Panc1 (cell line): ENCODE measurements at regions of chr18 and their contacts with region 1.

Region 1: GRCh38 chr18:23106580-23106979 is 28.7 kb upstream of the CABLES1 start:
- DNase-seq: peak; percentile 93
- ATAC-seq: peak; percentile 91
- H3K4me3 ChIP-seq: no peak overlapping the region; a peak in 1 of 4 replicates
- H3K27ac ChIP-seq: peak overlapping the region; percentile 89
- H3K4me1 ChIP-seq: peaks cover 57% of the 10 kb centered on the region
- H3K27me3 ChIP-seq: no peaks in the 10 kb centered on the region
- CTCF ChIP-seq: no peak

Region 2: GRCh38 chr18:22813648-22814328 is 292.8 kb before region 1 on chr18:
- CTCF ChIA-PET with region 1: no interaction called
- POLR2A ChIA-PET with region 1: no interaction called
- in situ Hi-C with region 1: no loop called
- intact Hi-C with region 1: no loop called
- DNase-seq: no peak
- ATAC-seq: peak; percentile 88
- H3K4me3 ChIP-seq: no peak overlapping the region
- H3K27ac ChIP-seq: no peak overlapping the region
- H3K4me1 ChIP-seq: no peaks in the 10 kb centered on the region
- H3K27me3 ChIP-seq: peaks cover 7% of the 10 kb centered on the region
- CTCF ChIP-seq: peak; percentile 60; the same call in 1 of the 2 replicates

Region 3: DNA sequence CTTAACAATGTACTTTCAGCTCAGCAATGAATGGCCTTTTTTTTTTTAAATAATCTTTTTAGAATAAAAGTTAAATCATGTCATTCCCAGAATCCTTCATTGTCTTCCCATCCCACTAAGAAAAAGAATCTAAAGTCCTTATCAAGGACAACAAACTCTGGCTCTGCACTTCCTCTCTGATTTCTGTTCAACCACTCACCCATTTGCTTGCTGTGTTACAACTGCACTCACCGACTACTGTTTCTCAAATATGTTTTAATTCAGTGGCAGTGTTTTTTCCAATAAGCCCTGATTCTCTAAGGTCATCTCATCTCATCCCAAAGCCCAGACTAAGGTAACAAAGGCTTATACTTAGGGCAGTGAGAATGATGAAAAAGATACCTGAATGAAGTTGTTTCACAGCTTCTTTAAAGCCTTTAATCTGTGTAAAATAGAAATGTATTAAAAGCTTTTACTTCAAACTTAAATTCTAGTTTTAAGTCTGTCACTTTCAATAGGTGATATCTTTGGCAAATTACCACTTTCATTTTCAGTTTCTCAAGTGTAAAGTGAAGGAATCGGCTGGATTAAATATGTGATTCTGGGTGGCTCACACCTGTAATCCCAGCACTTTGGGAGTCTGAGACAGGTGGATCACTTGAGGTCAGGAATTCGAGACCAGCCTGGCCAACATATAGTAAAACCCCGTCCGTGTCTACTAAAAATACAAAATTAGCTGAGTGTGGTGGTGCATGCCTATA is 85.9 kb before region 1 on chr18:
- CTCF ChIA-PET with region 1: no interaction called
- POLR2A ChIA-PET with region 1: no interaction called
- in situ Hi-C with region 1: no loop called
- intact Hi-C with region 1: loop called (anchors 10 kb)
- DNase-seq: no peak
- ATAC-seq: no peak
- H3K4me3 ChIP-seq: no peak overlapping the region
- H3K27ac ChIP-seq: no peak overlapping the region
- H3K4me1 ChIP-seq: no peaks in the 10 kb centered on the region
- H3K27me3 ChIP-seq: no peaks in the 10 kb centered on the region
- CTCF ChIP-seq: no peak

Region 4: DNA sequence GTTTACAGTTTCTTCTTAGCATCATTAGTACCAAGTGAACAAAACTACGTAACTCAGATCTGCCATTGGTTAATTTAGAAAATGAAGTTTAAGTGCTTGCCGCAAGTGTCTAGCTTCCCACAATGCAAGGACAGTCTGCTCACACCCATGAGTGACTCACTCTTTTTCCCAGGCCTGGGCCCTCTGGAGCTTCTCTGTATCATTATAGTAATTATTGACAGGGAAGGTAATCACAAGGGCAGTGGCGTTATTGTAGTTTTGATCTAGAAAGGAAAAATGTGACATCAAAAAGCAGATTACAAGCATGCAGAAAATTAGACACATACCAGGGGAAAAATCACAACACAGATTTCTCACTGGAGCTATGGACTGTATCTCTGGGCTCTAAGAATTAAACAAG is 441.3 kb after region 1 on chr18:
- CTCF ChIA-PET with region 1: no interaction called
- POLR2A ChIA-PET with region 1: no interaction called
- in situ Hi-C with region 1: no loop called
- intact Hi-C with region 1: no loop called
- DNase-seq: no peak
- ATAC-seq: no peak
- H3K4me3 ChIP-seq: no peak overlapping the region
- H3K27ac ChIP-seq: no peak overlapping the region
- H3K4me1 ChIP-seq: no peaks in the 10 kb centered on the region
- H3K27me3 ChIP-seq: no peaks in the 10 kb centered on the region
- CTCF ChIP-seq: no peak